ENCODE measurements at regions of chr1 and their contacts with region 1.

Region 1: GRCh38 chr1:244409701-244410100 is 42.0 kb downstream of the ADSS2 start:
- DNase-seq: no peak
- H3K4me3 Mint-ChIP-seq: no peak overlapping the region
- H3K27ac Mint-ChIP-seq: no peak overlapping the region
- H3K4me1 Mint-ChIP-seq: peaks cover 24% of the 10 kb centered on the region
- H3K27me3 Mint-ChIP-seq: no peaks in the 10 kb centered on the region

Region 2: GRCh38 chr1:244280859-244281258 is 128.8 kb before region 1 on chr1:
- intact Hi-C with region 1: no loop called
- DNase-seq: no peak
- H3K4me3 Mint-ChIP-seq: no peak overlapping the region
- H3K27ac Mint-ChIP-seq: no peak overlapping the region
- H3K4me1 Mint-ChIP-seq: no peaks in the 10 kb centered on the region
- H3K27me3 Mint-ChIP-seq: peaks cover 7% of the 10 kb centered on the region

Region 3: DNA sequence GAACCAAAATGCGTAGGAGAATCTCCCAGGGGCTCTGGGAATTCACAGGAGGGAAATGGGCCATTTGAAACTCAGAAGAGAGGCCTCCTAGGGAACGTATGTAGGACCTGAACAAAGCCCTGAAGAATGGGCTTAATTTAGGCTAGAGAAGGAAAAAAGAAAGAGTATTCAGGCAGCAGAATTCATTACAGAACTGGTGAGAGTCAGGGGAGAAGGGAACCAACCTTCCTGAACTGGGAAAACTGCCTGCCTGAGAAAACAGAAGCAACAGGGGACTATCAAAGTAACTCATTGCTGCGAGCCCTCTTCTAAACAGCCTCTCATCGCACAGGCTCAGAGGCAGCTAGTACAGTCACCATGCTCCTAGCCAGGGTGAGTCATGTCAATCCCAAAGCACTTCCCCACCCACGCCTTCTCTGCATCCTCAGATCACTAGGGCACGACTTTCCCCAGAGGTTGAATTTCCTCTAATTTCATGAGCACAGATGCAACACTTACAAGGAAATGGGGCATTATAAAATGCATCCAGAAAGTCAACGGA is 56.1 kb before region 1 on chr1:
- intact Hi-C with region 1: loop called (anchors 5 kb)
- DNase-seq: peak; percentile 5
- H3K4me3 Mint-ChIP-seq: no peak overlapping the region
- H3K27ac Mint-ChIP-seq: peak overlapping the region; percentile 73
- H3K4me1 Mint-ChIP-seq: peaks cover 47% of the 10 kb centered on the region
- H3K27me3 Mint-ChIP-seq: no peaks in the 10 kb centered on the region

Region 4: GRCh38 chr1:244422174-244422573 is 12.5 kb after region 1 on chr1:
- intact Hi-C with region 1: loop called (anchors 2 kb)
- DNase-seq: no peak
- H3K4me3 Mint-ChIP-seq: no peak overlapping the region
- H3K27ac Mint-ChIP-seq: peak overlapping the region; percentile 27
- H3K4me1 Mint-ChIP-seq: peaks cover 25% of the 10 kb centered on the region
- H3K27me3 Mint-ChIP-seq: no peaks in the 10 kb centered on the region

Measured in activated T-helper 1 cell treated with anti-CD3 and anti-CD28 coated beads, Interleukin-12 subunit alpha, Interleukin-12 subunit beta, Interleukin-2, Interleukin-4 antibody, amounts not matched to agents 30 ng/mL and 10 ng/mL and 1 ng/mL, durations not matched to agents 14 hours and 24 hours and 36 hours (primary cell).